Heart right ventricle (tissue), 16 donors: ENCODE measurements at regions of chr2 and their contacts with region 1.

Region 1: GRCh38 chr2:73939419-73939818 is 12.7 kb downstream of the DGUOK start:
- DNase-seq: no peak
- ATAC-seq: peak; percentile 38 to 96 (median 70)
- H3K4me3 ChIP-seq: no peak overlapping the region
- H3K27ac ChIP-seq: no peak overlapping the region
- H3K4me1 ChIP-seq: peaks cover 0 to 53% (median 14%) of the 10 kb centered on the region in 9 donors
- H3K27me3 ChIP-seq: no peaks in the 10 kb centered on the region
- CTCF ChIP-seq: peak in 5 of 9 donors; percentile 6 to 44 (median 27)

Region 2: DNA sequence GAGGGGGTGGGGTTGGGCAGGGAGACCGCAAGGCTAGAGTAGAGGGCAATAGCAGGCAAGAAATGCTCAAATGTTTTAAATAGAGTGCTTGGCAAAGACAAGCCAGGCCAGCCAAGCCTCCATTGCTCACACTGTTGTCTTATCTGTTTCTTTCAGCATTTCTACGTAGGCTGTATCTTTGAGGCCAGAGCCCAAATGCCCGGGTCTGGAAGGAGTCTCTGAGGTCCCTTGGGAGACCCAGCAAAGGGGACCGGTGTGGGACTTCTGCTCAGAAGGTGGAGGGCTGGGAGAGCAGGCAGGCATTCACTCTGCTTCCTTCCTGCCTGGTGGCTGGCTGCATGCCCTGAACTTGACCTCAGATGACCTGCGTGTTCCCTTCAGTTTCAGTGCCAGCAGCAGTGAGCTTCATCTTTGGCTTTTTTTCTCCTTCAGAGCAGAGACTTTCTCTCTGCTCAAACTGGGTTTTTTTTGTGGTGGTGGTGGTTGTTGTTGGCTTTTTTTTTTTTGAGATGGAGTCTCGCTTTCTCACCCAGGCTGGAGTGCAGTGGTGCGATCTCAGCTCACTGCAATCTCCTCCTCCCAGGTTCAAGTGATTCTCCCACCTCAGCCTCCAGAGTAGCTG is 31.5 kb after region 1 on chr2:
- intact Hi-C with region 1: loop called in 1 of 10 experiments (anchors 5 kb)
- DNase-seq: peak; percentile 82 to 85
- ATAC-seq: peak; percentile 86 to 94 (median 92)
- H3K4me3 ChIP-seq: peak overlapping the region in 3 of 10 donors; percentile 2 to 4 (median 4)
- H3K27ac ChIP-seq: peak overlapping the region in 9 of 10 donors; percentile 38 to 76 (median 59)
- H3K4me1 ChIP-seq: peaks cover 3 to 62% (median 30%) of the 10 kb centered on the region in 9 donors
- H3K27me3 ChIP-seq: no peaks in the 10 kb centered on the region
- CTCF ChIP-seq: no peak

Region 3: GRCh38 chr2:73985308-73986084 is 46.1 kb after region 1 on chr2:
- intact Hi-C with region 1: loop called in 1 of 10 experiments (anchors 5 kb)
- DNase-seq: peak; percentile 54 to 65
- ATAC-seq: peak in 6 of 8 donors; percentile 5 to 27 (median 9)
- H3K4me3 ChIP-seq: peak overlapping the region; percentile 34 to 67 (median 61)
- H3K27ac ChIP-seq: peak overlapping the region in 8 of 10 donors; percentile 49 to 95 (median 74)
- H3K4me1 ChIP-seq: peaks cover 12 to 78% (median 66%) of the 10 kb centered on the region in 9 donors
- H3K27me3 ChIP-seq: no peaks in the 10 kb centered on the region
- CTCF ChIP-seq: no peak

Region 4: GRCh38 chr2:74002487-74003391 is 63.3 kb after region 1 on chr2:
- intact Hi-C with region 1: loop called in 1 of 10 experiments (anchors 10 kb)
- DNase-seq: peak; percentile 78 to 88
- ATAC-seq: peak; percentile 95 to 98 (median 96)
- H3K4me3 ChIP-seq: peak overlapping the region in 9 of 10 donors; percentile 58 to 82 (median 71)
- H3K27ac ChIP-seq: peak overlapping the region in 8 of 10 donors; percentile 36 to 76 (median 59)
- H3K4me1 ChIP-seq: peaks cover 23 to 76% (median 68%) of the 10 kb centered on the region in 9 donors
- H3K27me3 ChIP-seq: no peaks in the 10 kb centered on the region
- CTCF ChIP-seq: peak in 4 of 9 donors; percentile 4 to 40 (median 22)

Region 5: DNA sequence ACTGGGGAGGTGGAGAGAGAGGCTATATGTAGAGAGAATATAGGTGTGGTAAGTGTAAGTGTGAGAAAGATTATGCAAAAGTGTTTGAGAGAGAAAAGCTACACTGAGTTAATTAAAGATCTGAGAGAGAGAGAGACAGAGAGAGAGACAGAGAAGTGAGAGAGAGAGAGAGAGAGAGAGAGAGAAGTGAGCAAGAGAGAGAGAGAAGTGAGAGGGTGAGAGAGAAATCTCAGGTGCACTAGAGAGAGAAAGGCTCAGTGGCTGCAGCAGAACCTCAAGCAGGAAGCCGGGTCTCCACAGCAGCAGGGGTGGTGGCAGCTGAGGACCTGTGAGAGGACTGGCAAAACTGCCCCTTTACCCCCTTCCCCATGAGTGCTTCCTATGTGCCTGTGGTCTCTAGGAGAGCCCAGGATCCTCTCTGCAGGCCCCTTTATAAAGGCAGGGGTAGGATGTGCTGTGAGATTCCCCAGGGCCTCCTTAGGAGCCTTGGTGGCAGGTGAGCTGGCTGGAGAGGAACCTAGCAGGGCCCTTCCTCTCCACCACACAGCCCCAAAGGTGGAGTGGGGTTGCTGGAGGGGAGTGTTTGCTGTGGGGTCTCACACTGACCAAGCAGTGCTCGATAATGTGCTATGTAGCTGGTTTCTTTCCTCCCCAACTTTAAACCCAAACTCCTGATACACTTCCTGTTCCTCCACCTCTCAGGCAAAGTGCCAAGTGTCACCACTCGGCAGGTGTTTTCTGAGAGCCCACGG is 351.2 kb after region 1 on chr2:
- intact Hi-C with region 1: no loop called
- DNase-seq: no peak
- ATAC-seq: peak in 5 of 8 donors; percentile 26 to 49 (median 35)
- H3K4me3 ChIP-seq: no peak overlapping the region
- H3K27ac ChIP-seq: peak overlapping the region in 1 of 10 donors; percentile 61
- H3K4me1 ChIP-seq: peaks cover 0 to 17% (median 6%) of the 10 kb centered on the region in 9 donors
- H3K27me3 ChIP-seq: no peaks in the 10 kb centered on the region
- CTCF ChIP-seq: no peak